ENCODE measurements at regions of chr14 and their contacts with region 1.

Region 1: DNA sequence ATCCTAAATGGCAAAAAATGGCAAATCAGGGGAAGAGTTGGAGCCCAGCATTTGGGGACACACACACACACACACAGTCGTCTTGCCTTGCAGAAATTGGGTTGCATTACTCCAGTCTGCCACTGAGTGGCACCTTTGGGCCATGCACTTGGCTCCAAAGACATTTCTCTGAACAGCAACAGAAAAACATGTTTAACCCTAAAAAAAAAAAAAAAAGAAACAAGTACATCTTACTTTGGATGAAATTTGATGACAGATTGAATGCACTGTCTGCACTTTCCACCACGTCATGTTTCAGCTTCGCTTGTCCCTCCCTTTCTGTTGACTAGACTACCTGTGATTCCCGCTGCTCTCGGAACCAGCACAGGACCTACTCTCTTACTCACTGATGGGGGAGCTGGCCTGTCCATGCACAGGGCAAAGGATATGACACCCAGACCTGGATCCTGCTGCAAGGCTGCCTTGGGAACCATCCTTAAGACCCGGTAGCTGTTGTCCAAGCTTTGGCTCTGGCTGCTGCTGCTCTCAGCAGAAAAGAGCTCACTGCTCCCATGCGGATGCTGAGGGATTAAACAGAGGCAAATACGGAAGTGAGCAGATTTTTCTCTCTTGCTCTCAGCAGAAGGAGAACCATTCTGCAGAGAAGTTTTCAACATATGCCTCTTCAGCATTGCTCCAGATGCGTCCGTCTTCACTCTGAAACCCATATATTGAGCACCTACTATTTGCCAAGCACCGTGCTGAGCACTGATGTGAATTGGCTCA is 376.8 kb downstream of the DPF3 start:
- DNase-seq: peak; percentile 47
- CTCF ChIP-seq: peak; percentile 86

Region 2: DNA sequence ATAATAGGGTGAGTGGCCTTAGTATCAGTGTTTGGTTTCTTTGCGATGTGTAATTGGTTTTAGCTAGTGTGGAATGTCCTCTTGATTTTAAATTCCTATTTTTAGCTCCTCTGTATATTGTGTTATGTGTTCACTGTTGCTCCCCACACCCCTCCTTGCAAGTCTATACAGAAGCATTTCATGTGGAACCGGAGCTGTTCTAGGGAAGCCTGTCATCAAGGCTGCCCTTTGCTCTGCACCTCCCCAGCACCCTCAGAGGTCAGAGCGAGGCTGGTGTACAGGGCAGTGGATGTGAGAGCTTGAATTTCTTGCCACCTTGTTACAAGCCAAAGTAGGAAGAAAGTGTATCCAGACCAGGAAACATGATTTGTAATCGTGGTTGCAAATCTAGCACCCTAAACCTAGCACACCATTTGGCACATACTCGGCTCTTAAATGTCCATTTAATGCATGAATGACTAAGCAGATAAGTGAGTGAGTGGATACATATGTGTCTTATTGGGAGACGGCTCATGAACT is 208.1 kb before region 1 on chr14:
- in situ Hi-C with region 1: no loop called
- DNase-seq: no peak
- CTCF ChIP-seq: no peak

Region 3: GRCh38 chr14:72565149-72565559 is 48.0 kb after region 1 on chr14:
- in situ Hi-C with region 1: no loop called
- DNase-seq: no peak
- CTCF ChIP-seq: no peak

Region 4: DNA sequence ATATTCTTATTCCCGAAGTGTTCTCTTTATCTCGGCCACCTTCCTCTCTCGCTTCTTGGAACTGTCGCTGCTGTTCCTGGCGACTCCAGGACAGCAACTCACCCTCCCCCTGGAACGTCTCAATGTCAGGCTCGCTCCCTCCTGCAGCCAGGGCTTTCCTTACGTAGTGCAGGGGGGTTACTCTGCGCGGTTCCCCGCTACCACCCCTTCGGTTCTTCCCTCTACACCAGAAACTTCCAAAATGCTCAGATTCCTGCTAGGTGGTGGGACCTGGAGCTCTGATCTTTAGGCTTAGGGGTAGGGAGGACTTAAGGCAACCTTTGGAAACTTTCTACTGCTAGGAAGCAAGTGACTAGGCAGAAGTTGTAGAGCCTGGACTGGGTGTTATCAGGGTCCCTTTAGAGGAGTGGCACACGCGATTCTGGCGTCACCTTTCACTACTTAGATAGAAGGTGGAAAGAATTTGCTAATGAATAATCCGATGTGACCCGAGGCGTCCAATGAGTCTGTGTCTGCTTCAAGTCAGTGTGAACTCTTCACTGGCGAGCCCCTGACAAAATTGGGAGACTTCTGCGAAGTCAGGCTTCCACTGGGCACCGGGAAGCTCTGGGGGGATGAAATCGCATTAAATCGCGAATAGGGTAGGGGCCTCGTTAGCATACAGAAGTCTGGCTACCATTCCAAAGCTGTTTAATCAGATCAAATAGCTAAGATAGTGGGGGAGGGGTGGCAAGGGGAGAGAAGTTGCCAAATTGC is 377.7 kb after region 1 on chr14:
- in situ Hi-C with region 1: loop called (anchors 5 kb)
- DNase-seq: no peak
- CTCF ChIP-seq: no peak

Region 5: DNA sequence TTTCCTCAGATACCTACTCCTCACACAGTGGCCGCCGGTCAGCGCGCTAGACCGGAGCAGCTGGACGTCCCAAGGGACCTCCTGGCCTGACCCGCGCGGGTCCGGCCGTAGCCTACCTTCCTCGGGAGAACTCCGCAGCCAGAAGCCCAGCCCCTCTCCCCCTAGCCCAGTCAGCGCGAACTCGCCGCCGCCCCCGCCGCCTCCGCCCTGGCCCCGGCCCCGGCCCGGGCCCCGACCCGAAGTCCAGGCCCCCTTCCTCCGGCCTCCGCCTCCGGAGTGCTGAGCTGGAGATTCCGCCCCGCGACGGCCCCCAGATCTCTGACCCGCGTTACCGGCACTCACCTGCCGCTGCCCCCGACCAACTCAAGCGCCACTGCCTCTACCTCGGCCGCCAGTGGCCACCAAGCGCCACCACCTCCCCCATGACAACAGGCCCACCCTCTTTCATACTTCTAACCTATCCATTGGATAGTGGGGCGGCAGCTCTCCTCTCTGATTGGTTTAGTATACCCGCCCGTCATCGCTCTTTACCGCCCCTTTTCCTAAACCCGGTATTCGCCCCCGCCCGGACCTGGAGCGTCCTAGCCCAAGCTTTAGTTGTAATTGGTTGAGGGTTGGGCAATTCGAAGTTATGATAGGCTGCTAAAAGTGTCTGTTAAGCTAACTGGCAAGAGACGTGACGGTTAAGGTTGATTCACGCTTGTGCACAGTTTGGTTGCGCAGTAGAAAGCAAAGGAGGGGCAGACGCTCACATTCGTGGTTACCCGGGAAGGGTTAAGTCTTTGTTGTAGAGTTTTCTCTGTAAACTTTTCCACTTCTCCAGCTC is 941.2 kb after region 1 on chr14 and contains the start of gene NUMB:
- in situ Hi-C with region 1: loop called (anchors 25 kb)
- DNase-seq: peak; percentile 96
- CTCF ChIP-seq: no peak

Measured in GM13976 (cell line).